ENCODE measurements at regions of chr15 and their contacts with region 1.

Region 1: DNA sequence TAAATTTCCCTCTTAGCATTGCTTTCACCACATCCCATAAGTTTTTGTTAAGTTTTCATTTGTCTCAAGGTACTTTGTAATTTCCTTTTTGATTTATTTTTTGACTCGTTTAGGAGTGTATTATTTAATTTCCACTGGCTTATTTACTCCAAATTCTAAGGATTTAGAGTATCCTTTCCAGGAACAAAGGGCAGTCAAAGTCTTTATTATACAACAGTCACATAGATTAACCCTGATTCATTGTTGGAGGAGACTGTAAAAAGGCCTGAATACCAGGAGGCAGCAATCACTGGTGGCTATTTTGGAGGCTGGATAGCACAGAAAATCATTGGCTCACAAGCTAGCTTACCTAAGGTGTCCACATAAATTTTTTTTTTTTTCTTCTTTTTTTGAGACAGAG is 39.9 kb downstream of the OIP5 start:
- DNase-seq: no peak
- H3K27ac ChIP-seq: peak overlapping the region; percentile 40; the same call in 1 of the 2 replicates
- CTCF ChIP-seq: no peak

Region 2: DNA sequence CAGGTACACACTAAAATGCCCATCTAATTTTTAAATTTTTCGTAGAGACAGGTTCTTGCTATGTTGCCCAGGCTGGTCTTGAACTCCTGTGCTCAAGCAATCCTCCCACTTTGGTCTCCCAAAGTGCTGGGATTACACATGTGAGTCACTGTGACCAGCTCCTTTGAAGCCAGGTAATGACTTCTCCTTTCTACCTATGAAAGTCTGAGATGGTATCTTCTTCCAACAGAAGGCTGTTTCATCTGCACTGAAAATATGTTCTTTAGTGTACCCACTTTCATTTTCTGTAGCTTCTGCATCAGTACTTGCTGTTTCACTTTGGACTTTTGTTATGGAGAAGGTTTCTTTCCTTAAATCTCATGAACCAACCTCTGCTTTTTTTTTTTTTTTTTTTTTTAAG is 31.1 kb after region 1 on chr15:
- CTCF ChIA-PET with region 1: interaction called, 10 read pairs
- POLR2A ChIA-PET with region 1: no interaction called
- DNase-seq: no peak
- H3K27ac ChIP-seq: no peak overlapping the region
- CTCF ChIP-seq: no peak

Measured in RWPE1 (cell line).